AG04450 (cell line): ENCODE measurements at regions of chr16 and their contacts with region 1.

Region 1: DNA sequence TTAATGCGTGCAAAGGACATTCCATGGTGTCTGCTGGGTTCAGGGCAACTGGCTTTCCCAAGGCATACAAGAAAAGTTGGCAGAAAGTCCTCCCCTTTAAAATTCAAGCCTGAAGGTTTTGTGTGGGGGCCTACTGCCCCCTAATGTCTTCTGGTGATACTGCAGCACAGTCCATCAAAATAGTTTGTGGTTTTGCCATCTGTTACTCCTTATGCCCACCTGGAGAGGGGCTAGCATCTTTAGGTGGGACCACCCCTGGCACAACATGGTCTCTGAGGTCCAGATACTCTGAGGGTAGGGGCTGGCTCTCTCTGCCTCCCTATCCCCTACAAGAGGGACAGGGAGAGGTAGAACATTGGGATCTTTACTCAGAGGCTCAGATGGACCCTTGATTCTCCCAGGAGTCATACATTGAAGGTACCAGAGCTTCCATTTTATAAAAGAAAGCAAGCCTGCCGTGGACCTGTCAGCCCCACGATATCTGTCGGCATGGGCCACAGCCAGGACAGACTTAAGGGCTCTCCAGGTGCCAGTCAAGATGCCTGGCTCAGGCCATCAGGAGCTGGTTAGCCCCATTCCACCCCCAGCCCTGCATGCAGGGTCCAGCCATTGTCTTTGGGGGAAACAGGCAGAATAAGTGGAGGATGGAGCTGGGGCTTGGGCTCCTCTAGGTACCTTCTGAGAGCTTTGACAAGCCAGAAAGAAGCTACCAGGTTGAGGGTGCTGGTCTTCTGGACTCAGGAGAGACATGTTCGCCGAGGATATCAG is 6.3 kb downstream of the ESRP2 start:
- DNase-seq: peak; percentile 29
- H3K4me3 ChIP-seq: no peak overlapping the region
- H3K27ac ChIP-seq: no peak overlapping the region
- H3K27me3 ChIP-seq: no peaks in the 10 kb centered on the region
- CTCF ChIP-seq: peak; percentile 96

Region 2: GRCh38 chr16:68275611-68276191 is 46.1 kb after region 1 on chr16:
- CTCF ChIA-PET with region 1: no interaction called
- POLR2A ChIA-PET with region 1: interaction called, 12 read pairs
- DNase-seq: no peak
- H3K4me3 ChIP-seq: no peak overlapping the region
- H3K27ac ChIP-seq: peak overlapping the region; percentile 21
- H3K27me3 ChIP-seq: no peaks in the 10 kb centered on the region
- CTCF ChIP-seq: no peak

Region 3: GRCh38 chr16:68310761-68311511 is 81.3 kb after region 1 on chr16 and contains the starts of genes PRMT7 and SLC7A6OS:
- CTCF ChIA-PET with region 1: no interaction called
- POLR2A ChIA-PET with region 1: no interaction called
- DNase-seq: peak; percentile 54
- H3K4me3 ChIP-seq: peak within 1 kb of the TSS; percentile 99
- H3K27ac ChIP-seq: peak within 1 kb of the TSS; percentile 81
- H3K27me3 ChIP-seq: no peaks in the 10 kb centered on the region
- CTCF ChIP-seq: no peak
- polyA plus RNA-seq, gene PRMT7: 26.2 and 32.4 TPM in 2 replicates
- polyA plus RNA-seq, gene SLC7A6OS: 8.5 and 10.9 TPM in 2 replicates